ENCODE measurements at regions of chr12 and their contacts with region 1.

Region 1: GRCh38 chr12:94163850-94164249 is 15.5 kb downstream of the PLXNC1 start:
- DNase-seq: no peak
- ATAC-seq: no peak
- H3K4me3 ChIP-seq: no peak overlapping the region
- H3K27ac ChIP-seq: no peak overlapping the region
- H3K4me1 ChIP-seq: peaks cover 0 to 29% (median 0%) of the 10 kb centered on the region in 12 donors
- H3K27me3 ChIP-seq: no peaks in the 10 kb centered on the region
- CTCF ChIP-seq: no peak
- POLR2A ChIP-seq: no peak

Region 2: GRCh38 chr12:94235848-94236247 is 72.0 kb after region 1 on chr12:
- intact Hi-C with region 1: loop called in 1 of 10 experiments (anchors 5 kb)
- DNase-seq: no peak
- ATAC-seq: no peak
- H3K4me3 ChIP-seq: no peak overlapping the region
- H3K27ac ChIP-seq: no peak overlapping the region
- H3K4me1 ChIP-seq: peaks cover 0 to 11% (median 0%) of the 10 kb centered on the region in 12 donors
- H3K27me3 ChIP-seq: no peaks in the 10 kb centered on the region
- CTCF ChIP-seq: no peak
- POLR2A ChIP-seq: no peak

Measured in heart left ventricle (tissue), 16 donors.